ENCODE measurements at regions of chr9 and their contacts with region 1.

Region 1: GRCh38 chr9:75658301-75658910 is 232.1 kb upstream of the PCSK5 start:
- DNase-seq: no peak
- ATAC-seq: no peak
- H3K4me3 ChIP-seq: no peak overlapping the region
- H3K27ac ChIP-seq: no peak overlapping the region
- H3K4me1 ChIP-seq: no peaks in the 10 kb centered on the region
- H3K27me3 ChIP-seq: no peaks in the 10 kb centered on the region
- CTCF ChIP-seq: no peak

Region 2: DNA sequence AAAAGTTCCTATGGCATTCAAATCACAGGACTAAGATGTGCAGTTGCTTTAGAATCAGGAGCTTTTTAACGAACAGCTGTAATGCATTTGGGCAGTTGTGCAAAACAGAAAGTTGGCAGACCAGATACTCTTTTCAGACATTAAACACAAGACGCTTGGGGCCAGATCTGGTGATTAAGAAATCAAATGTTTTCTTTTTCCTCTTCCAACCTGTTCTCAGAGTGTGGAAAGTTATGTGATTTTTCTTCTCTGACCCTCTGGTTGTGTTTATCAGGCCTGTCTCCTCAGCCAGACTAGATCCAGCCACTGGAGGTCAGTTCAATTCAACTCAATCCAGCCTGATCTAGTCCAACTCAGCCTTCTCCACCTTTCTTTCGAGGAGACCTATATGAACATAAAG is 66.4 kb before region 1 on chr9:
- intact Hi-C with region 1: loop called in 1 of 10 experiments (anchors 10 kb)
- DNase-seq: no peak
- ATAC-seq: peak in 4 of 8 donors; percentile 22 to 67 (median 38)
- H3K4me3 ChIP-seq: no peak overlapping the region
- H3K27ac ChIP-seq: no peak overlapping the region
- H3K4me1 ChIP-seq: no peaks in the 10 kb centered on the region
- H3K27me3 ChIP-seq: no peaks in the 10 kb centered on the region
- CTCF ChIP-seq: no peak

Region 3: DNA sequence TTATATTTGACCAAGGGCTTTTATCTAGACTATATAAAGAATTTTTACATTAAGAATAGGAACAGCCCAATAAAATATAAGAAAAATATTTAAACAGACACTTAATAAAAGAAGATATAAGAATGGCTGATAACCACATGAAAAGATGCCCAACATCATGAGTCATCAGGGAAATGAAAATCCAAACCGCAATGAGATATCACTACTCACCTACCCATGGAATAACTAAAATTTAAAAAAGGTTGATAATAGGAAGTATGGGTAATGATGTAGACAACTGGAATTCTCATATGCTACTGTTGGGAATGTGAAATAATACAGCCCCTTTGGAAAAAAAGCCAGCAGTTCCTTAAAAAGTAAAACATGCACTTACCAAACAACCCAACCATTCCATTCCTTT is 25.2 kb after region 1 on chr9:
- intact Hi-C with region 1: no loop called
- DNase-seq: no peak
- ATAC-seq: no peak
- H3K4me3 ChIP-seq: no peak overlapping the region
- H3K27ac ChIP-seq: no peak overlapping the region
- H3K4me1 ChIP-seq: peaks cover 0 to 18% (median 0%) of the 10 kb centered on the region in 9 donors
- H3K27me3 ChIP-seq: no peaks in the 10 kb centered on the region
- CTCF ChIP-seq: no peak

Region 4: GRCh38 chr9:75712700-75713099 is 54.3 kb after region 1 on chr9:
- intact Hi-C with region 1: loop called in 1 of 10 experiments (anchors 10 kb)
- DNase-seq: no peak
- ATAC-seq: peak in 7 of 8 donors; percentile 30 to 78 (median 59)
- H3K4me3 ChIP-seq: no peak overlapping the region
- H3K27ac ChIP-seq: peak overlapping the region in 5 of 10 donors; percentile 24 to 65 (median 60)
- H3K4me1 ChIP-seq: peaks cover 0 to 22% (median 4%) of the 10 kb centered on the region in 9 donors
- H3K27me3 ChIP-seq: no peaks in the 10 kb centered on the region
- CTCF ChIP-seq: no peak

Region 5: DNA sequence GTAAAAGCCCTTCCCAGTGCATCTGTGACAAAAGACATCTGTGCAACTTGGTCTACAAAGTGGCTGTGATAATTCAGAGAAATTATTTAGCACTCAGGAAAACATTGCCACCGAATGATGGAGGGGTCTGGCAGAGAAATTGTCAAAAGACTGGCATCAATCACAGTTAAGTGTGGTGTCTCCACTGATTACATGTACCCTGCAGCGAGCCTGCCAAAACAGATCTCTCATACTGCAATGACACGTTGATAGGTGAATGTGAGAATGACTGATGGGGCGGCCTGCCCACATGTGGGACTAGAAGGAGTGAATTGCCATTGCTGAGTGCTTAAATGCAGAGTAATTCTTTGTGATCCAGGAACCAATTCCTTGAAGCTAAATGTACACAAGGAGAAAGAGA is 95.7 kb after region 1 on chr9:
- intact Hi-C with region 1: loop called in 1 of 10 experiments (anchors 10 kb)
- DNase-seq: peak; percentile 53 to 60
- ATAC-seq: peak; percentile 76 to 99 (median 96)
- H3K4me3 ChIP-seq: no peak overlapping the region
- H3K27ac ChIP-seq: no peak overlapping the region
- H3K4me1 ChIP-seq: peaks cover 0 to 6% (median 0%) of the 10 kb centered on the region in 9 donors
- H3K27me3 ChIP-seq: no peaks in the 10 kb centered on the region
- CTCF ChIP-seq: no peak